B cell (primary cell): ENCODE measurements at regions of chr3 and their contacts with region 1.

Region 1: GRCh38 chr3:187066228-187066995 is 72.9 kb downstream of the RPL39L start:
- DNase-seq: peak; percentile 87
- ATAC-seq: peak; percentile 31
- H3K4me3 ChIP-seq: peak overlapping the region in 3 of 5 experiments; percentile 19 to 45 (median 26)
- H3K4me3 Mint-ChIP-seq: peak overlapping the region; percentile 81
- H3K27ac ChIP-seq: peak overlapping the region; percentile 97 to 98
- H3K27ac Mint-ChIP-seq: peak overlapping the region; percentile 97
- H3K4me1 ChIP-seq: peaks cover 70 to 86% of the 10 kb centered on the region in 2 donors
- H3K4me1 Mint-ChIP-seq: peaks cover 87% of the 10 kb centered on the region
- H3K27me3 ChIP-seq: no peaks in the 10 kb centered on the region
- H3K27me3 Mint-ChIP-seq: no peaks in the 10 kb centered on the region
- CTCF ChIP-seq: peak; percentile 40

Region 2: GRCh38 chr3:187016639-187017345 is 49.6 kb before region 1 on chr3:
- CTCF ChIA-PET with region 1: interaction called, 10 read pairs
- POLR2A ChIA-PET with region 1: interaction called, 7 read pairs
- intact Hi-C with region 1: loop called (anchors 1 kb)
- DNase-seq: peak; percentile 83
- ATAC-seq: peak; percentile 58
- H3K4me3 ChIP-seq: peak overlapping the region in 2 of 5 experiments; percentile 4 to 28
- H3K4me3 Mint-ChIP-seq: peak overlapping the region; percentile 75
- H3K27ac ChIP-seq: peak overlapping the region; percentile 92 to 96
- H3K27ac Mint-ChIP-seq: peak overlapping the region; percentile 90
- H3K4me1 ChIP-seq: peaks cover 97% of the 10 kb centered on the region in 2 donors
- H3K4me1 Mint-ChIP-seq: peaks cover 92% of the 10 kb centered on the region
- H3K27me3 ChIP-seq: no peaks in the 10 kb centered on the region
- H3K27me3 Mint-ChIP-seq: no peaks in the 10 kb centered on the region
- CTCF ChIP-seq: no peak

Region 3: GRCh38 chr3:187041362-187042307 is 24.8 kb before region 1 on chr3:
- CTCF ChIA-PET with region 1: interaction called, 6 read pairs
- POLR2A ChIA-PET with region 1: interaction called, 7 read pairs
- intact Hi-C with region 1: loop called (anchors 1 kb)
- DNase-seq: peak; percentile 70
- ATAC-seq: peak; percentile 79
- H3K4me3 ChIP-seq: peak overlapping the region in 1 of 5 experiments; percentile 31
- H3K4me3 Mint-ChIP-seq: peak overlapping the region; percentile 75
- H3K27ac ChIP-seq: peak overlapping the region; percentile 89 to 92
- H3K27ac Mint-ChIP-seq: peak overlapping the region; percentile 90
- H3K4me1 ChIP-seq: peaks cover 83 to 84% of the 10 kb centered on the region in 2 donors
- H3K4me1 Mint-ChIP-seq: peaks cover 84% of the 10 kb centered on the region
- H3K27me3 ChIP-seq: no peaks in the 10 kb centered on the region
- H3K27me3 Mint-ChIP-seq: no peaks in the 10 kb centered on the region
- CTCF ChIP-seq: no peak

Region 4: GRCh38 chr3:187093320-187093719 is 26.9 kb after region 1 on chr3:
- CTCF ChIA-PET with region 1: no interaction called
- POLR2A ChIA-PET with region 1: no interaction called
- intact Hi-C with region 1: no loop called
- DNase-seq: no peak
- ATAC-seq: no peak
- H3K4me3 ChIP-seq: no peak overlapping the region
- H3K4me3 Mint-ChIP-seq: no peak overlapping the region
- H3K27ac ChIP-seq: no peak overlapping the region
- H3K27ac Mint-ChIP-seq: no peak overlapping the region
- H3K4me1 ChIP-seq: peaks cover 0 to 3% of the 10 kb centered on the region in 2 donors
- H3K4me1 Mint-ChIP-seq: peaks cover 23% of the 10 kb centered on the region
- H3K27me3 ChIP-seq: no peaks in the 10 kb centered on the region
- H3K27me3 Mint-ChIP-seq: no peaks in the 10 kb centered on the region
- CTCF ChIP-seq: no peak

Region 5: DNA sequence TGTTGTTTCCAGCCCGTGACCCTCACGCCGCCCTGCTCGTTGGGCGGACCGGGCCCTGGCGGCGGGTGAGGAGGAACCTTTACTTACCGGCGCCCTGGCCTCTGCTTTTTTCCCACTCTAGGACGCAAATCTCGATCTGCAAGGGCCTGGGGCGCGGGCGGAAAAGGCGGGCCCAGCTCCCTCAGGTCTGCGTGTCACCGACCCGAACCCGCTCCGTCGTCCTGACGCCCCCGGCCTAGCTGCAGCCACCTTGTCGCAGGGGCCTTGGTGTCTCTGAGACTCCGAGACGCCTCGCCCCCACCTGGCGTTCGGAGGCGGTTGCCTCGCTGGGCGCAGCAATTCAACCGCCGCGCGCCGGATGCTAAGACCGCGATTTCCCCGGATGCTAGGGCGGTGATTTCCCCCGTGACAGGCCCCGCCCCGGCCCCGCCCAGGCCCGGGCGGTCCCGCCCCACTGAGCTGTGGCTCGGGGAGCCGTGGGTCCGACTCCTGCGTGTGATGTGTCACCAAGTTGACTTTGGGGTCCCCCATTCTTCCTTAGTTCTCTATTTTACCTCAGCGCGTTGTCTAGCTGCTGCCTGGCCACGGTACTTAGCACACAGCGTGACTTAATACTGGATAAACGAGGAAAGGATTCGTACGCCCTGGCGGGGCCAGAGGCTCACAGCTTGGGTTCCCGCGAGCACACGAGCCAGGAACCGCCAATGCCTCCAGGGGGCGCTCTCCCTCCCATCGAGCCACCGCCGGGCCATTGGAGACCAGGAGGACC is 72.9 kb after region 1 on chr3 and contains the start of gene RPL39L:
- CTCF ChIA-PET with region 1: interaction called, 4 read pairs
- POLR2A ChIA-PET with region 1: no interaction called
- intact Hi-C with region 1: loop called (anchors 5 kb)
- DNase-seq: peak; percentile 95
- ATAC-seq: peak; percentile 95
- H3K4me3 ChIP-seq: peak within 1 kb of the TSS in 4 of 5 experiments; percentile 49 to 68 (median 58)
- H3K4me3 Mint-ChIP-seq: peak within 1 kb of the TSS; percentile 90
- H3K27ac ChIP-seq: peak within 1 kb of the TSS; percentile 77 to 79
- H3K27ac Mint-ChIP-seq: peak within 1 kb of the TSS; percentile 90
- H3K4me1 ChIP-seq: peaks cover 12 to 14% of the 10 kb centered on the region in 2 donors
- H3K4me1 Mint-ChIP-seq: peaks cover 16% of the 10 kb centered on the region
- H3K27me3 ChIP-seq: no peaks in the 10 kb centered on the region
- H3K27me3 Mint-ChIP-seq: no peaks in the 10 kb centered on the region
- CTCF ChIP-seq: peak; percentile 79
- total RNA-seq, gene RPL39L: 2.0 and 3.1 TPM in 2 replicates

Region 6: DNA sequence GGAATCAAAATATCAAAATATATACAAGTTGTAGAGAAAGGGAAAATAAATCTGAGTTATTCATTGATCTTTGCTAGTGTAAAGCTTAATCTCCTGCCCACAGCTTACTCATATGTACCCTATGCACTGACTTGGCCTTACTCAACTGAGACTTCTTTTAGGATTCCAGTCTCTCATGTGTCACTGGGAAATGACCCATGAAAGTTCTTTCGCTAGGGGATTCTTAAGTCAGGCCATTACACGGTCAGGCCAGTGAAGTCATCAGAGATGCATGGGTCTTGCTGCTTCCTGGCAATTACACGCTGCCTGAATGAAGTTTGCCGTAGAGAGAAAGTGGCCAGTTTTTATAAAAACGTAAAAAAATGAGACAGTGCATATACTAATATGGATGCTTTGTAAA is 1066.8 kb after region 1 on chr3:
- CTCF ChIA-PET with region 1: no interaction called
- POLR2A ChIA-PET with region 1: no interaction called
- intact Hi-C with region 1: no loop called
- DNase-seq: no peak
- ATAC-seq: no peak
- H3K4me3 ChIP-seq: no peak overlapping the region
- H3K4me3 Mint-ChIP-seq: no peak overlapping the region
- H3K27ac ChIP-seq: no peak overlapping the region
- H3K27ac Mint-ChIP-seq: no peak overlapping the region
- H3K4me1 ChIP-seq: peaks cover 8% of the 10 kb centered on the region in 2 donors
- H3K4me1 Mint-ChIP-seq: peaks cover 14% of the 10 kb centered on the region
- H3K27me3 ChIP-seq: no peaks in the 10 kb centered on the region
- H3K27me3 Mint-ChIP-seq: no peaks in the 10 kb centered on the region
- CTCF ChIP-seq: no peak